Naive thymus-derived CD4-positive, alpha-beta T cell (primary cell): ENCODE measurements at regions of chr6 and their contacts with region 1.

Region 1: GRCh38 chr6:151974061-151974617 is 166.7 kb downstream of the ESR1 start:
- DNase-seq: no peak
- ATAC-seq: no peak
- H3K4me3 ChIP-seq: no peak overlapping the region
- H3K4me3 Mint-ChIP-seq: no peak overlapping the region
- H3K27ac ChIP-seq: no peak overlapping the region
- H3K27ac Mint-ChIP-seq: no peak overlapping the region
- H3K4me1 ChIP-seq: no peaks in the 10 kb centered on the region
- H3K4me1 Mint-ChIP-seq: no peaks in the 10 kb centered on the region
- H3K27me3 ChIP-seq: no peaks in the 10 kb centered on the region
- H3K27me3 Mint-ChIP-seq: peaks cover 0 to 22% (median 11%) of the 10 kb centered on the region in 5 donors

Region 2: DNA sequence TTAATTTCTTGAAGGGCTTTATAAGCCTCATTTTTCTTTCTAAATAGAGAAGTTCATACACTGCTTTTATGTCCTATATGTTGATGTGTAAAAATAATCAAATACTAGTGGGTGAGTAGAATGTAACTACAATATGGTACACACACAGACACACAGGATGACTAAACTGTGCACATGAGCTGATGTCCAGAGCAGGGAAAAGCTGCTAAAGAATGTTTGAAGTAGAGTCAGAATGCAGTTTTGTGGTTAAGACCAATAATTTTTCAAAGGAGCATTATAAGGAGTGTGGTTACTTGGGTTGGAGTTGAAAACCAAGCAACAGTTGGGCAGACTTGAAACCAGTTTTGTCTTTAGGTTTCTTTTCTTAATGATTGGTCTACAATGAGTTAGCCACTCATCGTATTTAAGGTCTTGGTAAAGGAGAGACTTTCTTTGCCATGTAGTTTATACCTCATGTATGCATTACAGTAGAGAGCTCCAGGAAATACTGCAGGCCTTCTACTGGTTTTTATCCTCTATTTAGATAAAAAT is 30.0 kb after region 1 on chr6:
- CTCF ChIA-PET with region 1: no interaction called
- POLR2A ChIA-PET with region 1: no interaction called
- intact Hi-C with region 1: loop called in 1 of 2 experiments (anchors 2 kb)
- DNase-seq: no peak
- ATAC-seq: no peak
- H3K4me3 ChIP-seq: no peak overlapping the region
- H3K4me3 Mint-ChIP-seq: no peak overlapping the region
- H3K27ac ChIP-seq: no peak overlapping the region
- H3K27ac Mint-ChIP-seq: no peak overlapping the region
- H3K4me1 ChIP-seq: no peaks in the 10 kb centered on the region
- H3K4me1 Mint-ChIP-seq: no peaks in the 10 kb centered on the region
- H3K27me3 ChIP-seq: no peaks in the 10 kb centered on the region
- H3K27me3 Mint-ChIP-seq: peaks cover 0 to 3% (median 0%) of the 10 kb centered on the region in 5 donors

Region 3: GRCh38 chr6:152184917-152185574 is 210.9 kb after region 1 on chr6:
- CTCF ChIA-PET with region 1: no interaction called
- POLR2A ChIA-PET with region 1: no interaction called
- intact Hi-C with region 1: no loop called
- DNase-seq: peak in 7 of 9 donors; percentile 25 to 78 (median 66)
- ATAC-seq: peak; percentile 77
- H3K4me3 ChIP-seq: peak overlapping the region; percentile 56
- H3K4me3 Mint-ChIP-seq: peak overlapping the region; percentile 87 to 99 (median 96)
- H3K27ac ChIP-seq: peak overlapping the region; percentile 71
- H3K27ac Mint-ChIP-seq: peak overlapping the region; percentile 95 to 100 (median 99)
- H3K4me1 ChIP-seq: peaks cover 37 to 48% of the 10 kb centered on the region in 2 donors
- H3K4me1 Mint-ChIP-seq: peaks cover 46 to 92% (median 75%) of the 10 kb centered on the region in 7 donors
- H3K27me3 ChIP-seq: no peaks in the 10 kb centered on the region
- H3K27me3 Mint-ChIP-seq: no peaks in the 10 kb centered on the region

Region 4: DNA sequence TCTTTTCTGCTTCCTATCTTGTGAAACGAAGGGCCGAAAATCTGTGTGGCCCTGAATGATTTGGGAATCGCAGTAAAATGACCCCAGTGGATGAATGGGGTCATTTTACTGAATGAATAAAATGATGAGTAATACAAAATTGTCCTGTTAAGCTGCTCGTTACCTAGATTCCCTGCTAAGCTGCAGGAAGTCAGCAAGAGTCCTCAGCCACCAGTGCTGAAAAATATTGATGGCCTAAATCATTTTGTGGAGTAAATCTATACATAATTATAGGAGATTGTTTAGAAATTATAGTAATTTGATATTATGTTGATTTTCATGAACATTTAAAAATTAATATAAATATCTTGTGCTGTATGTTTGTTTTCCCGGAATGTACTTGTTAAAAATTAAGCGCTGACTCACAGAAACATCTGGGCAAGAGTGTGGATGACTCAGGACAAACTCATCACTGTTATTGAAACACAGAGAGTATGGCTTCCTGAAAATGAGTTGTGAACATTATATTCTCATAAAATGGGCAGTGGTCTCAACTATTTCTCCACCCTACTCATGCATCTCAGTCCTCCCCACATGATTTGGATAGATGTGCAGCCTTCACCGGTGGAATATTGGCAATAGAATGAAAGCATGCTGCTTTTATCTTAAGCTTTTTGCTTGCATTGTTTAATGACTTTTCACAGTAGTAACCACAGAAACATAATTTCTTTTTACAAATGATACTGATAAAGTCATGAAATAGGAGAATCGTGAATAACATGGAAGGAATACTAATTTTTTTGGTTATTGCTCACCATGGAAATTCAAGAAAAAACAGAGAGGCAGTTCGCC is 1193.1 kb after region 1 on chr6:
- CTCF ChIA-PET with region 1: no interaction called
- POLR2A ChIA-PET with region 1: no interaction called
- intact Hi-C with region 1: no loop called
- DNase-seq: no peak
- ATAC-seq: no peak
- H3K4me3 ChIP-seq: no peak overlapping the region
- H3K4me3 Mint-ChIP-seq: no peak overlapping the region
- H3K27ac ChIP-seq: no peak overlapping the region
- H3K27ac Mint-ChIP-seq: no peak overlapping the region
- H3K4me1 ChIP-seq: no peaks in the 10 kb centered on the region
- H3K4me1 Mint-ChIP-seq: peaks cover 0 to 1% (median 0%) of the 10 kb centered on the region in 7 donors
- H3K27me3 ChIP-seq: no peaks in the 10 kb centered on the region
- H3K27me3 Mint-ChIP-seq: peaks cover 0 to 15% (median 6%) of the 10 kb centered on the region in 5 donors